HepG2 (cell line): ENCODE measurements at regions of chr17 and their contacts with region 1.

Region 1: GRCh38 chr17:73092523-73093135 is at the start of gene SLC39A11:
- DNase-seq: peak; percentile 92
- ATAC-seq: peak; percentile 87
- H3K4me3 ChIP-seq: peak within 1 kb of the TSS; percentile 76 to 80 (median 78)
- H3K27ac ChIP-seq: peak within 1 kb of the TSS; percentile 61
- H3K4me1 ChIP-seq: peaks cover 42% of the 10 kb centered on the region
- H3K27me3 ChIP-seq: peaks cover 0 to 24% of the 10 kb centered on the region in 2 experiments; a peak in 3 of 5 replicates
- CTCF ChIP-seq: 0 out of 2 replicates have a peak, but pooled peaks have one; percentile 10
- EP300 ChIP-seq: peak in 1 of 2 experiments; percentile 55; a peak in 2 of 4 replicates
- POLR2A ChIP-seq: peak; percentile 56 to 79
- RAD21 ChIP-seq: peak; percentile 30; the same call in 1 of the 2 replicates
- total RNA-seq, gene SLC39A11: 19.2 and 31.5 TPM in 2 replicates

Region 2: GRCh38 chr17:72985881-72986720 is 106.5 kb before region 1 on chr17:
- CTCF ChIA-PET with region 1: no interaction called
- POLR2A ChIA-PET with region 1: no interaction called
- in situ Hi-C with region 1: no loop called
- intact Hi-C with region 1: loop called (anchors 5 kb)
- DNase-seq: peak; percentile 79
- ATAC-seq: peak; percentile 97
- H3K4me3 ChIP-seq: no peak overlapping the region
- H3K27ac ChIP-seq: no peak overlapping the region
- H3K4me1 ChIP-seq: peaks cover 26% of the 10 kb centered on the region
- H3K27me3 ChIP-seq: no peaks in the 10 kb centered on the region
- CTCF ChIP-seq: peak; percentile 92
- EP300 ChIP-seq: no peak
- POLR2A ChIP-seq: no peak
- RAD21 ChIP-seq: peak; percentile 95

Region 3: GRCh38 chr17:73007407-73007806 is 85.2 kb before region 1 on chr17:
- CTCF ChIA-PET with region 1: no interaction called
- POLR2A ChIA-PET with region 1: no interaction called
- in situ Hi-C with region 1: no loop called
- intact Hi-C with region 1: loop called (anchors 1 kb)
- DNase-seq: no peak
- ATAC-seq: no peak
- H3K4me3 ChIP-seq: no peak overlapping the region
- H3K27ac ChIP-seq: no peak overlapping the region
- H3K4me1 ChIP-seq: peaks cover 26% of the 10 kb centered on the region
- H3K27me3 ChIP-seq: no peaks in the 10 kb centered on the region
- CTCF ChIP-seq: no peak
- EP300 ChIP-seq: no peak
- POLR2A ChIP-seq: no peak
- RAD21 ChIP-seq: no peak

Region 4: GRCh38 chr17:73068322-73069153 is 24.1 kb before region 1 on chr17:
- CTCF ChIA-PET with region 1: no interaction called
- POLR2A ChIA-PET with region 1: interaction called, 6 read pairs
- in situ Hi-C with region 1: no loop called
- intact Hi-C with region 1: loop called (anchors 1 kb)
- DNase-seq: peak; percentile 99
- ATAC-seq: peak; percentile 94
- H3K4me3 ChIP-seq: peak overlapping the region in 1 of 3 experiments; percentile 17; a peak in 1 of 6 replicates
- H3K27ac ChIP-seq: peak overlapping the region; percentile 91
- H3K4me1 ChIP-seq: peaks cover 56% of the 10 kb centered on the region
- H3K27me3 ChIP-seq: no peaks in the 10 kb centered on the region
- CTCF ChIP-seq: no peak
- EP300 ChIP-seq: peak; percentile 82 to 92; a peak in 3 of 4 replicates
- POLR2A ChIP-seq: peak; percentile 50 to 59; a peak in 2 of 4 replicates
- RAD21 ChIP-seq: peak; percentile 34

Region 5: DNA sequence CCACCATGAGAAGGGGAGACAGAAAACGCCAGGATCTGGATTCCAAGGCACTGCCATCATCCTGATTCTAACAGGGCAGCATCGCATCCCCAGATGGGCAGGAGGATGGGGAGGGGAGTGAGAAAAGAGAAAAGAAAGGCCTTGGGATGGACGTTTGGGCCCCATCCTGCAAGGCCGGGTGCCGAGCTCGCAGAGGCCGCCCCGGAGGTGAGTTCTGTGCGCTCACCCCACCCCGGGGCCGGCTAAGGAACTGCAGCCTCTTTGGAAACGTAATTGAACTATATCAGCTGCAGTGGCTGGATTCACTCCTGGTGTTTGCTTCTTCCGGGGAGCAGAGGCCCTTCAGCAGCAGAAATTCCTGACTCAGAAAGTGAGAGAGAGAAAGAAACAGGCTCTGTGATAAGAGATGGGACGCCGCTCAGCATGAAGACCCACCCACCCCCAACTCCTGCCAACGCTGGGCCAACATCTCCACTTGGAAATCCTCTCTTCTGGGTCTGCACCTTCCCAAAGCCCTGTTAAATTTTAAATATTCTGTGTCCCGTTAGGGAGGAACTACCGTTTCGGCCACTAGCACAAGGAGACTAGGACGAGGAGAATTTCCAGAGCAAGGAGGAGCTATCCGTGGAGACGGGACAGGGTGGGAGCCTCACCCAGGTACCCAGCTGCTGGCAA is 63.7 kb after region 1 on chr17:
- CTCF ChIA-PET with region 1: no interaction called
- POLR2A ChIA-PET with region 1: no interaction called
- in situ Hi-C with region 1: no loop called
- intact Hi-C with region 1: loop called (anchors 1 kb)
- DNase-seq: peak; percentile 70
- ATAC-seq: peak; percentile 95
- H3K4me3 ChIP-seq: peak overlapping the region in 2 of 3 experiments; percentile 13 to 51; a peak in 4 of 6 replicates
- H3K27ac ChIP-seq: no peak overlapping the region
- H3K4me1 ChIP-seq: peaks cover 59% of the 10 kb centered on the region
- H3K27me3 ChIP-seq: peaks cover 10 to 64% of the 10 kb centered on the region in 2 experiments
- CTCF ChIP-seq: peak; percentile 94
- EP300 ChIP-seq: no peak
- POLR2A ChIP-seq: no peak
- RAD21 ChIP-seq: peak; percentile 94

Region 6: GRCh38 chr17:73187203-73187769 is 94.7 kb after region 1 on chr17:
- CTCF ChIA-PET with region 1: no interaction called
- POLR2A ChIA-PET with region 1: no interaction called
- in situ Hi-C with region 1: no loop called
- intact Hi-C with region 1: loop called (anchors 1 kb)
- DNase-seq: peak; percentile 98
- ATAC-seq: peak; percentile 81
- H3K4me3 ChIP-seq: peak overlapping the region in 1 of 3 experiments; percentile 3; a peak in 2 of 6 replicates
- H3K27ac ChIP-seq: no peak overlapping the region
- H3K4me1 ChIP-seq: peaks cover 72% of the 10 kb centered on the region
- H3K27me3 ChIP-seq: peaks cover 0 to 28% of the 10 kb centered on the region in 2 experiments; a peak in 3 of 5 replicates
- CTCF ChIP-seq: peak; percentile 20; the same call in 1 of the 2 replicates
- EP300 ChIP-seq: peak; percentile 33 to 96; a peak in 3 of 4 replicates
- POLR2A ChIP-seq: no peak
- RAD21 ChIP-seq: no peak

Region 7: GRCh38 chr17:73261952-73262675 is 169.5 kb after region 1 on chr17:
- CTCF ChIA-PET with region 1: no interaction called
- POLR2A ChIA-PET with region 1: no interaction called
- in situ Hi-C with region 1: no loop called
- intact Hi-C with region 1: no loop called
- DNase-seq: peak; percentile 93
- ATAC-seq: peak; percentile 90
- H3K4me3 ChIP-seq: peak overlapping the region; percentile 54 to 75 (median 63)
- H3K27ac ChIP-seq: peak overlapping the region; percentile 98
- H3K4me1 ChIP-seq: peaks cover 74% of the 10 kb centered on the region
- H3K27me3 ChIP-seq: no peaks in the 10 kb centered on the region
- CTCF ChIP-seq: peak; percentile 78
- EP300 ChIP-seq: peak; percentile 62 to 73; a peak in 2 of 4 replicates
- POLR2A ChIP-seq: peak; percentile 62 to 87
- RAD21 ChIP-seq: peak; percentile 82

Region 8: DNA sequence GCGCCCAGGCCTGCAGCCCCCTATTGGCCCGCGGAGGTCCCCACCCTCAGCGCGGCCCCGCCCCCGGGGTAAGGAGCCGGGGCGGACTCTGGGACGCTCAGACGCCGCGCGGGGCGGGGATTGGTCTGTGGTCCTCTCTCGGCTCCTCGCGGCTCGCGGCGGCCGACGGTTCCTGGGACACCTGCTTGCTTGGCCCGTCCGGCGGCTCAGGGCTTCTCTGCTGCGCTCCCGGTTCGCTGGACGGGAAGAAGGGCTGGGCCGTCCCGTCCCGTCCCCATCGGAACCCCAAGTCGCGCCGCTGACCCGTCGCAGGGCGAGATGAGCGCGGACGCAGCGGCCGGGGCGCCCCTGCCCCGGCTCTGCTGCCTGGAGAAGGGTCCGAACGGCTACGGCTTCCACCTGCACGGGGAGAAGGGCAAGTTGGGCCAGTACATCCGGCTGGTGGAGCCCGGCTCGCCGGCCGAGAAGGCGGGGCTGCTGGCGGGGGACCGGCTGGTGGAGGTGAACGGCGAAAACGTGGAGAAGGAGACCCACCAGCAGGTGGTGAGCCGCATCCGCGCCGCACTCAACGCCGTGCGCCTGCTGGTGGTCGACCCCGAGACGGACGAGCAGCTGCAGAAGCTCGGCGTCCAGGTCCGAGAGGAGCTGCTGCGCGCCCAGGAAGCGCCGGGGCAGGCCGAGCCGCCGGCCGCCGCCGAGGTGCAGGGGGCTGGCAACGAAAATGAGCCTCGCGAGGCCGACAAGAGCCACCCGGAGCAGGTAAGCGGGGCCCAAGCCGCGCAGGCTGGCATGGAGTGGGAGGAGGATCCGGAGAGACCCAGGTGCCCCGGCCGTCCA is 1656.1 kb after region 1 on chr17 and contains the start of gene NHERF1:
- CTCF ChIA-PET with region 1: no interaction called
- POLR2A ChIA-PET with region 1: no interaction called
- in situ Hi-C with region 1: no loop called
- intact Hi-C with region 1: no loop called
- DNase-seq: peak; percentile 88
- ATAC-seq: peak; percentile 65
- H3K4me3 ChIP-seq: peak within 1 kb of the TSS; percentile 95 to 99 (median 99)
- H3K27ac ChIP-seq: peak within 1 kb of the TSS; percentile 96
- H3K4me1 ChIP-seq: peaks cover 70% of the 10 kb centered on the region
- H3K27me3 ChIP-seq: no peaks in the 10 kb centered on the region; a peak in 1 of 5 replicates
- CTCF ChIP-seq: peak; percentile 57
- EP300 ChIP-seq: 0 out of 4 replicates have a peak, but pooled peaks of 1 of the 2 experiments have one; percentile 22
- POLR2A ChIP-seq: peak; percentile 99 to 100
- RAD21 ChIP-seq: peak; percentile 68
- total RNA-seq, gene NHERF1: 138 and 169 TPM in 2 replicates